ENCODE measurements at regions of chr4 and their contacts with region 1.

Region 1: DNA sequence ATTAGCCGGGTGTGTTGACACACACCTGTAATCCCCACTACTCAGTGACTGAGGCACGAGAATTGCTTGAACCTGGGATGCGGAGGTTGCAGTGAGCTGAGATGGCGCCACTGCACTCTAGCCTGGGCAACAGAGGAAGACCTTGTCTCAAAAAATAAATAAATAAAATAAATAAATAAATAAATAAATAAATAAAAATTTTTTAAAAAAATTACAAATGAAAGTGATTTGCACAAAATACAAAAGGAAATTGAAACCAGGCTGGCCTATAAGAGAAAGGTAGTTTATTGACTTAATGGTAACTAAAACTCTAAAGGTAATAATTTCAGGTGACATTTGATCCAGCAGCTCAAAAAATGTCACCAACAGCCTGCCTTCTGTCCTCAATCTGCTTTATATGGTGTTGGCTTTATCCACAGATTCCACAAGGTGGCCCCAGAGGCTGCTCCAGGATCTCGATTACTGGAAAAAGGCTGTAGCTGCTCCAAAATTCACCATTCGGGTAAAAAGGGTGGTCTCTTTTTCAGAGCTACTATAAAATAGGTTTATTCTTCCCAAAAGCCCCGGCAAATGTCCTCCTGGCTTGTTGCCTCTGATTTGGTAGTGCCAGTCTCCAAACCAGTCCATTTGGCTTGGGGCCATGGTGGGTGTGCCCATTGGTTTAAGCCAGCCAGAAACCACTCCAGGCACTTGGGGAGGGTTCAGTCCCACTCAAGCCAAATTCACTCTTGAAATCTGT is 61.4 kb upstream of the TRIM2 start:
- DNase-seq: no peak
- H3K4me3 ChIP-seq: no peak overlapping the region
- CTCF ChIP-seq: peak; percentile 76

Region 2: DNA sequence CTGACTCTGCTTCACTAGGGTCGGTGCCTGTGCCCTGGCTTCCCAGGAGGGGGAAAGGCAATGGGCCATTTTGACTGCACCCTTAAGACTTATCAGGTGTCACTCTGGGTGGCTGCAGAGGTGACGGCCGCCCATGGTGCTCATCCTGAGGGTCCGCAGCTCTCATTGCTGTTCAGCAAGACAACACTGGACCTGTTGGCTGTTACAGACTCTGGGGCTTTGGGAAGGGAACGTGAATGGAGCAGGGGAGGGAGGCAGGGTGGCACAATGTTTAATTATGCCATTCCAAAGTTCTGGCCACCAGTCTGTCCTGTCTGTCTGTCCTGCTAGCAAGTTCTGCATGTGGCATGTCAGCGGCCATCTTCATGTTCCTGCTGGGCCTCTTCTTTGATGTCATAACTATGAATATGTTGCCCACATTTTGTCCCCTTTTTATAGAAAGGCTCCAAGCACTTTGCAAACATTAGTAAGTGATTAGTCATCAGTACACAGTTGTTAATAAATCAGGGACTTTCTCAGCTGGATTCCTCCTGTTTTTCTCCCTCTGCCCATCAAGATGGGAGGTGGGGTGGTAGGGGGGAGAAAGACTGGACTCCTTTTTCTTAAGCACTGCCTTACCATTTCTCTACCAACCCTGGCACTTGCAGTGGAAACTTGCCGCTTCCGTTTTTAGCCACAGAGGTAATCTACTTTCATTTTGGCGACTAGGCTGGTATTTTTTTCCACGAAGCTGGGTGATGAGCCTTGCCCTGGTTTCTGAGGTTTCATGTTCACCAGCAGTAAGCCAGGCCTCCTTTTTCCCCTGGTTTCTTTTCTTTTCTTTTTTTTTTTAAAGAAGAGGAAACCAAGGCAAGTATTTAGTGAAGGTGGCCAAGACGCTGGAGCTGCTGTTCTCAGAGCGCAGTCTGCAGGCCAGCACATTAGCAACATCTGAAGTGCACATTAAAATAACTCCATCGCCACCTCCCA is 27.3 kb before region 1 on chr4:
- CTCF ChIA-PET with region 1: no interaction called
- POLR2A ChIA-PET with region 1: no interaction called
- DNase-seq: peak; percentile 44
- H3K4me3 ChIP-seq: peak overlapping the region; percentile 40
- CTCF ChIP-seq: no peak

Region 3: GRCh38 chr4:153156263-153156662 is 13.4 kb after region 1 on chr4:
- CTCF ChIA-PET with region 1: interaction called, 13 read pairs
- POLR2A ChIA-PET with region 1: interaction called, 5 read pairs
- DNase-seq: no peak
- H3K4me3 ChIP-seq: no peak overlapping the region
- CTCF ChIP-seq: peak; percentile 18

Region 4: DNA sequence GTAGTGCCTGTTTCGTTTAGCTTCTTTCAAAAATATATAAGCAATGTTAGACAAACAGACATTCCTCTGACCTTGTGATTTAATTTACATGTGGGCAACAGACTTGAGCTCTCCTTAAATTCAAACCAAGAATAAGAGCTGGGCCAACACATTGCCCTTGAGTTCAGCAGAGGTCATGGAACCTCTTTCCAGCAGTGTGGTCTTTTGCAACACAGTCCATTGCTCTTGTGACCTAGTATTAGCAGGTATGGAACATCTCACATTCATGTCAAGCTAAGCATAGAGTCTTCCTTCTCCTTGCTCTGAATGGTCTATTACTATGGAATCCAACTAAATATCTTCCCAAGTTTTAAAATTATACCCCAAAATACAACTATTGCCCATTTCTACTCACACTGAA is 167.9 kb after region 1 on chr4:
- CTCF ChIA-PET with region 1: interaction called, 73 read pairs
- POLR2A ChIA-PET with region 1: no interaction called
- DNase-seq: no peak
- H3K4me3 ChIP-seq: no peak overlapping the region
- CTCF ChIP-seq: no peak

Region 5: GRCh38 chr4:153326513-153326912 is 183.6 kb after region 1 on chr4:
- CTCF ChIA-PET with region 1: interaction called, 17 read pairs
- POLR2A ChIA-PET with region 1: no interaction called
- DNase-seq: no peak
- H3K4me3 ChIP-seq: no peak overlapping the region
- CTCF ChIP-seq: no peak

Region 6: GRCh38 chr4:153344131-153345010 is 201.5 kb after region 1 on chr4 and contains the start of gene MND1:
- CTCF ChIA-PET with region 1: interaction called, 16 read pairs
- POLR2A ChIA-PET with region 1: no interaction called
- DNase-seq: no peak
- H3K4me3 ChIP-seq: peak within 1 kb of the TSS; percentile 83
- CTCF ChIP-seq: peak; percentile 81

Measured in AG04449 (cell line).